Motor neuron (in vitro differentiated cells): ENCODE measurements at regions of chr2 and their contacts with region 1.

Region 1: GRCh38 chr2:202178342-202178958 is 59.9 kb downstream of the SUMO1 start:
- ATAC-seq: peak; percentile 69 to 84 (median 78)
- H3K4me3 ChIP-seq: no peak overlapping the region
- H3K27ac ChIP-seq: no peak overlapping the region
- H3K4me1 ChIP-seq: no peaks in the 10 kb centered on the region

Region 2: DNA sequence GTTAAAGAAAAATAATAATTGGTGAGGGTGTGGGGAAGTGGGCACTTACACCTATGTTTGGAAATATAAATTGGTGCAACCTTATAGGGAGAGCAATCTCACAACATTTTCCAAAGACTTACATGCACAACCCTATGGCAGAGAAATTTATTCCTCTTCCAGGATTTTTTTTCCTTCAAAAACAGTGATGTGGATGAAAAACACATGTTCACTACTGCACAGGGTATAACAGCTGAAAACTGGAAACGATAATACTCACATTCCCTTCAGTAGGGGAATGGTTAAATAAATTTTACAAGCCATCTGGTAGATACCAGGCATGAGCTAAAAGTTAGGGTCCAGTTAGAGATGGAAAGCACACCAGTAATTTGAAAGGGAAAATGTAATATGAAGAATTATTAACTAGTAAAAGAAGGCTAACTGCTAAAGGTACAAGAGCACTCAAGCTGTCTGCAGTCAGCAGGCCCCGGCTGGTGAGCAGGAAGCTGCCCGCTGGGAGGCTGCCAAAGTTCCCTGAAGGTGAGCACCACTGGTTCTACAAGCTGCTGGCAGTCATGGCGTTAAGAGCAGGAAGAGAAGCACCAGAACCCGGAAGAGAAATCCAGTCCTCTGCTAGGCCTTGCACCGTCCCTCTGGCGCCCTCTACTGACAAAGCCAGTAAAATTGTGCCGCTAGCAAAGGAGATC is 946.5 kb before region 1 on chr2:
- in situ Hi-C with region 1: loop called in 1 of 9 experiments (anchors 25 kb)
- ATAC-seq: peak; percentile 27 to 85 (median 66)
- H3K4me3 ChIP-seq: no peak overlapping the region
- H3K27ac ChIP-seq: no peak overlapping the region
- H3K4me1 ChIP-seq: no peaks in the 10 kb centered on the region

Region 3: DNA sequence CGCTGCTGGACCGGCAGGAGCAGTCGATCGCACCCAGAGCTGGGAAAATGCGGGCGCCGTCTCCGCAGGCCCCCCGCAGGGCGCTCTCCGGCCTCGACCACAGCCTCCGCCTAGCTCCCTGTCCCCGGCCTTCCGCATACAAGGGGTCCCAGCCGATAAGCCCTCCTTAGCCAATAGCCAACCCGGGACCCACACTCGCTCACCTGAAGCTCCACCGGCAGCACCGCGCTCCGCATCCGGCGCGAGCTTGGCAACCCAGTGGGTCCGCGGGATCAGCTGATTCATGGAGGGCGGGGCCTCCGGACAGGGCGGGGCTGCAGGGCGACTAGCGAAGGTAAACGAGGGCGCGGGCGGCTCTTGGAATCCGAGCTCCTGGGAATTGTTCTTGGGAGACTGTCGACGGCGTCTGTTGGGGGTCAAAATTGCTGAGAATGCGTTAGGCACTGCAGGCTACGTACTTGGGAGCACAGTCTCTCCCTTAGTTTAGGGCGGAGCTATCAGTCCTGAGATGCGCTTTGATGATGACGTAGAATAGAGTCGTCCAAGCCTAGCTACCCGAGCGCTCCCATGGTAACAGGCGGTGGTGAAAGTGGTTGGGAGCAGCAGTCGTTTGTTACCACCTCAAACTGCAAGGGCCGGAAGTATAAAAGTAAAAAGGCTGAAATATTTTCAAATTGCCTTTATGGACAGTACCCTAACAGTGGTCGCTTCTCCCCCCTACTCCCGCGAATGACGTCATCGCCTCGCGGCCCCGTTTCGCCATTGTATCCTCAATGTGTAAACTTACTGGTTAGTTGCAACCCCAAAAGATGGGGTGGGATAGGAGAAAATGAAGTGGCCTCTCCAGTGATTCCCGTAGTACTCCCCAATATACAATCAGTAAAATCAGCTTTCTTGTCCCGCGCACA is 397.5 kb before region 1 on chr2 and contains the start of gene ALS2:
- in situ Hi-C with region 1: loop called (anchors 25 kb)
- ATAC-seq: peak; percentile 88 to 93 (median 92)
- H3K4me3 ChIP-seq: peak within 1 kb of the TSS; percentile 60 to 88 (median 71)
- H3K27ac ChIP-seq: peak within 1 kb of the TSS; percentile 59 to 62
- H3K4me1 ChIP-seq: peaks cover 5 to 19% of the 10 kb centered on the region in 2 donors
- total RNA-seq, gene ALS2: 17.3 to 32.9 (median 21.8) TPM

Region 4: DNA sequence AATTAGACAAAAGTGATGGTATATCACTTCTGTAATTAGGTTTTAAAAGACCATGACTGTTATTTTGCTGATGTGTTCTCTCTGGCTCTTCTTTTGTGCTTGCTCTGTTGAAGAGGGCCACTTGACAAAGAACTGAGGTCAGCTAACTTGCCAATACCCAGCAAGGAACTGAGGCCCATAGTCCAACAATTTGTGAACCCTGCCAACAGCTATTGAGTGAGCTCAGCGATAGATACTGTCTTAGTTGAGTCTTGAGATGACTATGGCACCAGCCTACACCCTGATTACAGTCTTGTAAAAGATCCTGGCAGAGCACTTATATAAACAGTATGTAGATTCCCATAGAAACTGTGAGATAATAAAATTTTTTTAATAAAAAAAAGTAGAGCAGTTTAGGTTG is 300.6 kb after region 1 on chr2:
- in situ Hi-C with region 1: no loop called
- ATAC-seq: peak in 2 of 8 experiments; percentile 14 to 49
- H3K4me3 ChIP-seq: no peak overlapping the region
- H3K27ac ChIP-seq: no peak overlapping the region
- H3K4me1 ChIP-seq: no peaks in the 10 kb centered on the region